ENCODE measurements at regions of chr6 and their contacts with region 1.

Region 1: GRCh38 chr6:145233955-145234354 is 501.4 kb downstream of the EPM2A start:
- DNase-seq: peak; percentile 20
- ATAC-seq: no peak
- H3K4me3 ChIP-seq: no peak overlapping the region
- H3K27ac ChIP-seq: no peak overlapping the region
- H3K4me1 ChIP-seq: no peaks in the 10 kb centered on the region
- H3K27me3 ChIP-seq: no peaks in the 10 kb centered on the region
- CTCF ChIP-seq: no peak
- POLR2A ChIP-seq: no peak
- RAD21 ChIP-seq: no peak

Region 2: DNA sequence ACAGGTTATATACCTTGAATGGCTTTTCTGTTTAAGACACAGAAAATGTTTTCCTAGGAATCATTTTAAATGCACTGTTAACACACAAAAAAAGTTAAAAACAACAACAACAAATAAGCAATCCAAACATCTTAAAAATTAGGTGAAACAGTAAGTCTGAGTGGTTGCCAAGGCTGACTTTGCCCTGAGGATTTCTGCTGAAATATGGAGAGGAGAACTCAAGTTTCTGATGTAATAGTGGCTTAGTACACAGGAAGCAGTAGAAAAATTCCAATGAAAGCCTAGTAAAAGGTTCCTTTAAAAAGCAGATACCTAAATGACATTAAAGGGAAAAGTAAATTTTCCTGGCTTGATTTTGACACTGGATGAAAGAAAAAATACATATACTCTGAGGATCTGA is 317.2 kb after region 1 on chr6:
- CTCF ChIA-PET with region 1: no interaction called
- POLR2A ChIA-PET with region 1: no interaction called
- dilution Hi-C with region 1: no loop called
- in situ Hi-C with region 1: no loop called
- intact Hi-C with region 1: loop called (anchors 10 kb)
- DNase-seq: peak; percentile 8
- ATAC-seq: no peak
- H3K4me3 ChIP-seq: no peak overlapping the region
- H3K27ac ChIP-seq: no peak overlapping the region
- H3K4me1 ChIP-seq: no peaks in the 10 kb centered on the region; the same call in 1 of the 2 replicates
- H3K27me3 ChIP-seq: no peaks in the 10 kb centered on the region
- CTCF ChIP-seq: no peak
- POLR2A ChIP-seq: no peak
- RAD21 ChIP-seq: no peak